T-cell (primary cell): ENCODE measurements at regions of chr6 and their contacts with region 1.

Region 1: GRCh38 chr6:136249811-136250685 is at the start of gene MTFR2:
- DNase-seq: peak; percentile 79 to 98 (median 92)
- ATAC-seq: peak; percentile 88 to 97 (median 95)
- H3K4me3 ChIP-seq: peak within 1 kb of the TSS; percentile 64 to 97
- H3K4me3 Mint-ChIP-seq: peak within 1 kb of the TSS; percentile 92 to 97 (median 95)
- H3K27ac ChIP-seq: no peak within 1 kb of the TSS
- H3K27ac Mint-ChIP-seq: peak within 1 kb of the TSS; percentile 34 to 86
- H3K4me1 ChIP-seq: peaks cover 10 to 11% of the 10 kb centered on the region in 2 experiments
- H3K4me1 Mint-ChIP-seq: peaks cover 39 to 47% (median 40%) of the 10 kb centered on the region in 3 donors
- H3K27me3 ChIP-seq: no peaks in the 10 kb centered on the region
- H3K27me3 Mint-ChIP-seq: no peaks in the 10 kb centered on the region
- total RNA-seq, gene MTFR2: 1.2 to 1.8 (median 1.3) TPM

Region 2: GRCh38 chr6:135497412-135498269 is 752.4 kb before region 1 on chr6 and contains the start of gene AHI1:
- CTCF ChIA-PET with region 1: interaction called, 5 to 13 read pairs
- POLR2A ChIA-PET with region 1: interaction called in 1 of 2 experiments, 4 read pairs
- DNase-seq: peak; percentile 59 to 95 (median 83)
- ATAC-seq: peak; percentile 82 to 89 (median 85)
- H3K4me3 ChIP-seq: peak within 1 kb of the TSS; percentile 79 to 83
- H3K4me3 Mint-ChIP-seq: no peak within 1 kb of the TSS
- H3K27ac ChIP-seq: peak within 1 kb of the TSS; percentile 92
- H3K27ac Mint-ChIP-seq: no peak within 1 kb of the TSS
- H3K4me1 ChIP-seq: peaks cover 0 to 3% of the 10 kb centered on the region in 2 experiments
- H3K4me1 Mint-ChIP-seq: peaks cover 11 to 16% (median 13%) of the 10 kb centered on the region in 3 donors
- H3K27me3 ChIP-seq: no peaks in the 10 kb centered on the region
- H3K27me3 Mint-ChIP-seq: no peaks in the 10 kb centered on the region
- total RNA-seq, gene AHI1: 9.6 to 27.6 (median 15.8) TPM

Region 3: GRCh38 chr6:136173519-136174507 is 76.2 kb before region 1 on chr6:
- CTCF ChIA-PET with region 1: no interaction called
- POLR2A ChIA-PET with region 1: no interaction called
- DNase-seq: peak in 18 of 35 experiments; percentile 2 to 30 (median 7)
- ATAC-seq: peak in 2 of 4 experiments; percentile 48 to 91
- H3K4me3 ChIP-seq: no peak overlapping the region
- H3K4me3 Mint-ChIP-seq: peak overlapping the region; percentile 0 to 56 (median 1)
- H3K27ac ChIP-seq: no peak overlapping the region
- H3K27ac Mint-ChIP-seq: no peak overlapping the region
- H3K4me1 ChIP-seq: no peaks in the 10 kb centered on the region
- H3K4me1 Mint-ChIP-seq: peaks cover 5 to 14% (median 6%) of the 10 kb centered on the region in 3 donors
- H3K27me3 ChIP-seq: no peaks in the 10 kb centered on the region
- H3K27me3 Mint-ChIP-seq: peaks cover 0 to 2% of the 10 kb centered on the region in 2 donors

Region 4: GRCh38 chr6:136262940-136263339 is 12.9 kb after region 1 on chr6:
- CTCF ChIA-PET with region 1: interaction called in 1 of 2 experiments, 4 read pairs
- POLR2A ChIA-PET with region 1: interaction called, 7 to 13 read pairs
- DNase-seq: no peak
- ATAC-seq: peak in 1 of 4 experiments; percentile 18
- H3K4me3 ChIP-seq: no peak overlapping the region
- H3K4me3 Mint-ChIP-seq: no peak overlapping the region
- H3K27ac ChIP-seq: no peak overlapping the region
- H3K27ac Mint-ChIP-seq: no peak overlapping the region
- H3K4me1 ChIP-seq: no peaks in the 10 kb centered on the region
- H3K4me1 Mint-ChIP-seq: peaks cover 36 to 45% (median 37%) of the 10 kb centered on the region in 3 donors
- H3K27me3 ChIP-seq: no peaks in the 10 kb centered on the region
- H3K27me3 Mint-ChIP-seq: no peaks in the 10 kb centered on the region